Esophagus squamous epithelium (tissue), 5 donors: ENCODE measurements at regions of chr7 and their contacts with region 1.

Region 1: GRCh38 chr7:151028131-151028947 is at the start of gene ABCB8:
- DNase-seq: peak; percentile 91
- H3K4me3 ChIP-seq: peak within 1 kb of the TSS; percentile 62 to 94 (median 78)
- H3K27ac ChIP-seq: peak within 1 kb of the TSS; percentile 73 to 96 (median 90)
- H3K4me1 ChIP-seq: peaks cover 13 to 46% (median 15%) of the 10 kb centered on the region in 3 donors
- H3K27me3 ChIP-seq: no peaks in the 10 kb centered on the region
- CTCF ChIP-seq: peak; percentile 44 to 68 (median 57)
- POLR2A ChIP-seq: peak in 2 of 4 donors; percentile 53 to 69
- total RNA-seq, gene ABCB8: 23.1 to 41.0 (median 26.1) TPM

Region 2: GRCh38 chr7:151110941-151111645 is 82.8 kb after region 1 on chr7:
- intact Hi-C with region 1: loop called (anchors 5 kb)
- DNase-seq: peak; percentile 16
- H3K4me3 ChIP-seq: no peak overlapping the region
- H3K27ac ChIP-seq: peak overlapping the region in 3 of 4 donors; percentile 5 to 45 (median 9)
- H3K4me1 ChIP-seq: peaks cover 17 to 51% (median 24%) of the 10 kb centered on the region in 3 donors
- H3K27me3 ChIP-seq: no peaks in the 10 kb centered on the region
- CTCF ChIP-seq: peak; percentile 59 to 94 (median 88)
- POLR2A ChIP-seq: no peak

Region 3: DNA sequence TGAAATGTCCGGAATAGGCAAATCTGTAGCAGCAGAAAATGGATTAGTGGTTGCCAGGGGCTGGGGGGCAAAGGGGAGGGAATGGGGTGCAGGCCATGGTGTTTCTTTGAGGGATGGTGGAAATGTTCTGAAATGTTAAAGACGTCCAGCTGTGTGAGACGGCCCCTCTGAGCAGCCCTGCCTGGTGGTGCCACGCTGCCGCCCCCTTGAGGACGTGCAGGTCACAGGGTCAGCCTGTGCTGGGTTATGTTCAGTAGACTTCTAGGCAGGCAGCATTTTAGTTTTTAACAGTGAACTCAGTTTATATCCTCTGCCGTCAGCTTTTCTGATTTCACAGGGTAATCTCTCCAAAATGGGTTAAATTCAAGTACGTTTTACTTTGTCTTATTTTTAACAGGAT is 322.7 kb after region 1 on chr7:
- intact Hi-C with region 1: no loop called
- DNase-seq: no peak
- H3K4me3 ChIP-seq: no peak overlapping the region
- H3K27ac ChIP-seq: no peak overlapping the region
- H3K4me1 ChIP-seq: peaks cover 7 to 35% (median 10%) of the 10 kb centered on the region in 3 donors
- H3K27me3 ChIP-seq: no peaks in the 10 kb centered on the region
- CTCF ChIP-seq: peak in 1 of 6 experiments; percentile 5
- POLR2A ChIP-seq: no peak